ENCODE measurements at regions of chr12 and their contacts with region 1.

Region 1: DNA sequence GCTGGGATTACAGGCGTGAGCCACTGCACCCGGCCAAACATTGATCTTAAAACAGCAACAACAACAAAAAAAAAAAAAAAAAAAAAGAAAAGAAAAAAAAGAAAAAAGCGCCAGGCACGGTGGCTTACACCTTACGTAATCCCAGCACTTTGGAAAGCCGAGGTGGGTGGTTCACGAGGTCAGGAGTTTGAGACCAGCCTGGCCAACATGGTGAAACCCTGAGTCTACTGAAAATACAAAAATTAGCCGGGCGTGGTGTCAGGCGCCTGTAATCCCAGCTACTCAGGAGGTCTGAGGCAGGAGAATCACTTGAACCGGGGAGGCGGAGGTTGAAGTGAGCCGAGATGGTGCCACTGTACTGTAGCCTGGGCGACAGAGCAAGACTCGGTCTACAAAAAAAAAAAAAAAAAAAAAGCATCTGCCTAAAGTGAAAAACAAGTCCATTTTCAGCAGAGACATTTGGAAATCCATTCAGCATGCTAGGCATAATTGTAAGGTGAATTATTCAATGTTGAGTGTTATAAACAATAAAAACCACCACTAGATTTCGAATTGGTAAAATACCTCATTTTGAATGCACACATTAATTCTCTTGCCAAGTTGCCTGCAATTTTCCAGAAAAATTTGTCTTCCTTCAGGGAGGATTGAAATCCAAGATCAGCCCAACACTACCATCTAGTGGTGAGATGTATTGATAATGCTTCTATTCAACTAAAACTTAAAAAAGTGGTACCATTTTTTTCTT is 8.0 kb upstream of the CERS5 start:
- DNase-seq: no peak
- H3K4me3 ChIP-seq: no peak overlapping the region
- H3K27ac ChIP-seq: no peak overlapping the region
- H3K4me1 ChIP-seq: no peaks in the 10 kb centered on the region
- H3K27me3 ChIP-seq: no peaks in the 10 kb centered on the region
- CTCF ChIP-seq: peak; percentile 34 to 85 (median 76)
- POLR2A ChIP-seq: no peak

Region 2: DNA sequence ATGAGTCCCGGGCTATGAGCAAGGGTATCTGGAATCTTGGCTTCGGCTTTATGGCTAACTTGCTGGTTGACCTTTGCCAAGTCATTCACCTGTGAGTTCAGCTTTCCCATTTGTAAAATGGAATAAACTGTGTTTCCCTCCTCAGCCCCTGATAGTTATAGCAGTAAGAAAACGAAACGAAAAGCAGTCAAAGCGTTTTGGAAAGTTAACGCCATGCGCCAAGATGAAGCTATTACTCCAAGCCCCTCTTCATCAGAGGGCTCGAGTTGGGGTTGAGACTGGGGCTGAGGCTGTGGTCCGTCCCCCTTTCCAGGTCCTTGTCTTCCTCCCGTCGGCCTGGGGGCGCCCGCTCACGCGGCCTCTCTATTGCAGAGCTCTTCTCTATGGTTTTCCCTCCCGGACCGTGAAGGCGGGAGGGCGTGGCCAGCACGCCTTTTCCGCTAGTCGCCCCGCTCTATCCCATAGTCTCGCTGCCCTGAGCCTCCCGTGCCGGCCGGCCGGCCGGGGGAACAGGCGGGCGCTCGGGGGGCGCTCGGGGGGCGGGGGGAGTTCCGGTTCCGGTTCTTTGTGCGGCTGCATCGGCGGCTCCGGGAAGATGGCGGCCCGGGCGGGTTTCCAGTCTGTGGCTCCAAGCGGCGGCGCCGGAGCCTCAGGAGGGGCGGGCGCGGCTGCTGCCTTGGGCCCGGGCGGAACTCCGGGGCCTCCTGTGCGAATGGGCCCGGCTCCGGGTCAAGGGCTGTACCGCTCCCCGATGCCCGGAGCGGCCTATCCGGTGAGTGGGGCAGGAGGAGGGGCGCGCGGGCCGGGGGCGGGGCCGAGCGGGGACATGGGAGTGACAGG is 90.1 kb before region 1 on chr12 and contains the start of gene SMARCD1:
- intact Hi-C with region 1: loop called (anchors 10 kb)
- DNase-seq: peak; percentile 87 to 88
- H3K4me3 ChIP-seq: peak within 1 kb of the TSS; percentile 87 to 96 (median 88)
- H3K27ac ChIP-seq: peak within 1 kb of the TSS; percentile 96 to 98
- H3K4me1 ChIP-seq: no peaks in the 10 kb centered on the region
- H3K27me3 ChIP-seq: no peaks in the 10 kb centered on the region
- CTCF ChIP-seq: no peak
- POLR2A ChIP-seq: no peak
- total RNA-seq, gene SMARCD1: 50.6 to 56.7 (median 51.5) TPM

Region 3: GRCh38 chr12:50142993-50143392 is 32.1 kb before region 1 on chr12:
- intact Hi-C with region 1: no loop called
- DNase-seq: no peak
- H3K4me3 ChIP-seq: no peak overlapping the region
- H3K27ac ChIP-seq: no peak overlapping the region
- H3K4me1 ChIP-seq: no peaks in the 10 kb centered on the region
- H3K27me3 ChIP-seq: no peaks in the 10 kb centered on the region
- CTCF ChIP-seq: no peak
- POLR2A ChIP-seq: no peak